Right cardiac atrium (tissue), 5 donors: ENCODE measurements at regions of chr3 and their contacts with region 1.

Region 1: DNA sequence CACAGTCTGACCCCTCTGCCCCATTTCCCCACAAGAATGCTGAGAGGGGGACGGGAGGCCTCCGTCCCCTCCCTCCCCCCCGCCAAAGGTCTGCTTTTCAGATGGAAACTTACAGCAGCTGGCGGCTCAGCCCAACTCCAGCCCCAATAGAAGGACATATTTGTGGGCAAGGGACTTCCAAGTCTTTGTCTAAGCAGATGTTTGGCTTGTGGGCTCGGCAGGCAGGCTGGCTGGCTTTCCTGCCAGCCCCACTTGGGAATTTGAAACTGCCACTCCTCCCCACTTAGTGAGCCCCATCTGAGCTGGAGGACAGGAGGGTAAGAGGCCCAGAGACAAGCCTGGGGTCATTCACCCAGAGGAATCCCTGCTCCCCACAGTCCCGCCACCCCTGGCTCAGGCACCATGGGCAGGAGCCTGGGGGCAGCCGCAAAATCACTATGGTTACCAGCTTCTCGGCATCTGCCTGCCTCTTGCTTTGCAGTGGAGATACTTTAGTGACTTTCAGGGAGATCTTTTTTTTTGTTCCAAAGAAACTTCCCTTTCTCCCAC is 53.6 kb downstream of the LMCD1 start:
- DNase-seq: peak; percentile 63 to 87 (median 80)
- ATAC-seq: peak; percentile 36 to 38
- H3K4me3 ChIP-seq: no peak overlapping the region
- H3K27ac ChIP-seq: peak overlapping the region; percentile 51
- H3K4me1 ChIP-seq: peaks cover 11% of the 10 kb centered on the region
- H3K27me3 ChIP-seq: no peaks in the 10 kb centered on the region

Region 2: GRCh38 chr3:8501371-8502131 is 53.6 kb before region 1 on chr3 and contains the start of gene LMCD1:
- intact Hi-C with region 1: loop called in 1 of 4 experiments (anchors 10 kb)
- DNase-seq: peak; percentile 97 to 99 (median 99)
- ATAC-seq: peak; percentile 99
- H3K4me3 ChIP-seq: peak within 1 kb of the TSS; percentile 65
- H3K27ac ChIP-seq: peak within 1 kb of the TSS; percentile 91
- H3K4me1 ChIP-seq: peaks cover 23% of the 10 kb centered on the region
- H3K27me3 ChIP-seq: no peaks in the 10 kb centered on the region
- total RNA-seq, gene LMCD1: 45.6 to 57.8 (median 55.4) TPM